ENCODE measurements at regions of chr1 and their contacts with region 1.

Region 1: GRCh38 chr1:208029381-208030287 is 118.7 kb upstream of the CD34 start:
- DNase-seq: no peak
- H3K4me3 ChIP-seq: no peak overlapping the region
- H3K27ac ChIP-seq: peak overlapping the region in 2 of 3 donors; percentile 37 to 48
- H3K4me1 ChIP-seq: peaks cover 37 to 39% of the 10 kb centered on the region in 2 donors
- H3K27me3 ChIP-seq: no peaks in the 10 kb centered on the region
- CTCF ChIP-seq: no peak
- POLR2A ChIP-seq: no peak

Region 2: GRCh38 chr1:207925210-207925609 is 104.4 kb before region 1 on chr1:
- intact Hi-C with region 1: no loop called
- DNase-seq: peak; percentile 78 to 89
- H3K4me3 ChIP-seq: no peak overlapping the region
- H3K27ac ChIP-seq: peak overlapping the region; percentile 36 to 78 (median 63)
- H3K4me1 ChIP-seq: peaks cover 10 to 31% of the 10 kb centered on the region in 2 donors
- H3K27me3 ChIP-seq: no peaks in the 10 kb centered on the region
- CTCF ChIP-seq: no peak
- POLR2A ChIP-seq: peak in 1 of 2 donors; percentile 23

Region 3: GRCh38 chr1:208059409-208059995 is 29.9 kb after region 1 on chr1:
- intact Hi-C with region 1: loop called (anchors 2 kb)
- DNase-seq: no peak
- H3K4me3 ChIP-seq: no peak overlapping the region
- H3K27ac ChIP-seq: peak overlapping the region; percentile 41 to 77 (median 55)
- H3K4me1 ChIP-seq: peaks cover 13 to 17% of the 10 kb centered on the region in 2 donors
- H3K27me3 ChIP-seq: no peaks in the 10 kb centered on the region
- CTCF ChIP-seq: no peak
- POLR2A ChIP-seq: no peak

Region 4: GRCh38 chr1:208081972-208082371 is 52.3 kb after region 1 on chr1:
- intact Hi-C with region 1: loop called (anchors 5 kb)
- DNase-seq: peak; percentile 66 to 75
- H3K4me3 ChIP-seq: no peak overlapping the region
- H3K27ac ChIP-seq: peak overlapping the region in 2 of 3 donors; percentile 35 to 62
- H3K4me1 ChIP-seq: peaks cover 18 to 23% of the 10 kb centered on the region in 2 donors
- H3K27me3 ChIP-seq: no peaks in the 10 kb centered on the region
- CTCF ChIP-seq: peak in 3 of 6 experiments; percentile 29 to 43 (median 36)
- POLR2A ChIP-seq: no peak